H1 (cell line): ENCODE measurements at regions of chr9 and their contacts with region 1.

Region 1: DNA sequence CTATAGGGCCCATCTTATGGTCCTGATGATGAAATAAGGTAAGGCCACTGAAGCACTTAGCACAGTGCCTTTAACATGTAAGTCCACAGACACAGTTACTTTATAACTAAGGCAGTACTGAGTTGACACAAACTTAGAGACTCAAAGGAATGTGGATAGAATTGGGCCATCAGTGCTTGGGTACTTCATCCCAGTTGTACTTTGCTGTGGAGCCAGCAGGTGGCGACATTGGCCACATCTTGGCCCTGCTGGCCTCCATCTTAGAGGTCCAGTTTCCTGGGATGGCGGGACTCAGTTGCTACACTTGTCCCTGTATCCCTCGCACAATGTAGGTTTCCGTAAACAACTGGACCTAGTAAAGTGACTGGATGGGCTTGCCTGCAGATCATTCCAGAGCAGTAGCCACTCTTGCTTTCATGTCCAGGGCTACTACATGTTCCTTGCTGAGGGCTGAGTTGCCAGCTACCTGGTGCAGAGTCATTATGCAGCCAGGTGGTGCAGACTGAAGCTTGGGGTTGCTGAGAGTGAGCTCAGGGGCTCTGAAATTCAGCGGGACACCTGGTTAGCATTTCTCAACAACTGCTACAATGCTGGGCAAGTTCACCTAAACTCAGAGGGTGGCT is 10.6 kb downstream of the MTAP start:
- DNase-seq: peak in 1 of 2 experiments; percentile 81
- H3K4me3 ChIP-seq: no peak overlapping the region
- H3K27ac ChIP-seq: no peak overlapping the region
- H3K4me1 ChIP-seq: peaks cover 0 to 2% (median under 1%) of the 10 kb centered on the region in 4 experiments; a peak in 2 of 7 replicates
- H3K27me3 ChIP-seq: no peaks in the 10 kb centered on the region
- CTCF ChIP-seq: peak; percentile 80 to 98 (median 88)
- EP300 ChIP-seq: no peak
- POLR2A ChIP-seq: no peak
- RAD21 ChIP-seq: peak; percentile 84 to 88

Region 2: GRCh38 chr9:21624675-21625644 is 188.1 kb before region 1 on chr9:
- CTCF ChIA-PET with region 1: no interaction called
- POLR2A ChIA-PET with region 1: no interaction called
- DNase-seq: no peak
- H3K4me3 ChIP-seq: no peak overlapping the region
- H3K27ac ChIP-seq: no peak overlapping the region
- H3K4me1 ChIP-seq: no peaks in the 10 kb centered on the region
- H3K27me3 ChIP-seq: no peaks in the 10 kb centered on the region
- CTCF ChIP-seq: no peak
- EP300 ChIP-seq: no peak
- POLR2A ChIP-seq: no peak
- RAD21 ChIP-seq: no peak

Region 3: GRCh38 chr9:21802195-21803000 is 10.7 kb before region 1 on chr9 and contains the start of gene MTAP:
- CTCF ChIA-PET with region 1: interaction called, 15 read pairs
- POLR2A ChIA-PET with region 1: interaction called, 28 read pairs
- DNase-seq: peak; percentile 81 to 87
- H3K4me3 ChIP-seq: peak within 1 kb of the TSS; percentile 88 to 93 (median 90)
- H3K27ac ChIP-seq: peak within 1 kb of the TSS; percentile 89
- H3K4me1 ChIP-seq: peaks cover 0 to 16% (median 10%) of the 10 kb centered on the region in 4 experiments; a peak in 4 of 7 replicates
- H3K27me3 ChIP-seq: no peaks in the 10 kb centered on the region; a peak in 1 of 7 replicates
- CTCF ChIP-seq: no peak
- EP300 ChIP-seq: no peak
- POLR2A ChIP-seq: peak; percentile 79 to 99
- RAD21 ChIP-seq: no peak
- total RNA-seq, gene MTAP: 100 and 107 TPM in 2 replicates

Region 4: DNA sequence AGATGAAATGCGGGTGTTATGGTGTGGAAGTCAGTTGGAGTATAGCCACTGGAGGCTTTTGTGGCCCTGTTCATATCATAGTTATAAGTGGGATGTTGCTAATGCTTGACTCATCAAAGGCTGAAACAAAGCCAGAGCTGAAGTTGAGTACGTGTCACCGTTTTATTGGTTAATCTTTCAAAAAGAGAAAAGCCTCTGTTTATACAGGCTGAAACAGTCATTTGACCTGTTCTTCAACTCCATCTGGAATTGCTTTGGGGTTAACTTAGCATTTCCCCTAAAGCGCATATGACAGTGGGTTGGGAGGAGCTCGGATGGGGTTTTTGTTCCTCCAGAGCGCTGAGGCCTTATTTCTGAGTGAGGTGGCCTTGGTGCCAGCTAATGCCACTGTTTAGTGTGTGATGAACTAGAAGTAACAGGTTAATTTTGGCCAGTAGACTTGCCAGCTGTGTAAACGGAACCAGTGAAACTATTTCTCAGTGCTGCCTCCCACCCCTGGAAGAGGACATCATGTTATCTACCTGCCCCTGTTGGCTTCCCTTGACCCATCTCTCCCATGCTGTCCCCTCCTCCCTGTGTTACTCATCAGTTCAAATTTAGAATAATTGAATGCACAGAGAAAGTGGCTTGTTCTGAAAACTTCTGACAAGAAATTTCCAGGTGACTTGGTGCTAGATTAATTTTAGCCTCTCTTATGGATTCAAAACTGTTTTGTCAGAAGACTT is 23.5 kb after region 1 on chr9:
- CTCF ChIA-PET with region 1: interaction called, 19 read pairs
- POLR2A ChIA-PET with region 1: interaction called, 3 read pairs
- DNase-seq: no peak
- H3K4me3 ChIP-seq: no peak overlapping the region
- H3K27ac ChIP-seq: no peak overlapping the region
- H3K4me1 ChIP-seq: no peaks in the 10 kb centered on the region
- H3K27me3 ChIP-seq: no peaks in the 10 kb centered on the region
- CTCF ChIP-seq: no peak
- EP300 ChIP-seq: no peak
- POLR2A ChIP-seq: no peak
- RAD21 ChIP-seq: no peak

Region 5: GRCh38 chr9:21856301-21857094 is 43.4 kb after region 1 on chr9:
- CTCF ChIA-PET with region 1: interaction called, 11 read pairs
- POLR2A ChIA-PET with region 1: no interaction called
- DNase-seq: no peak
- H3K4me3 ChIP-seq: no peak overlapping the region
- H3K27ac ChIP-seq: no peak overlapping the region
- H3K4me1 ChIP-seq: no peaks in the 10 kb centered on the region
- H3K27me3 ChIP-seq: no peaks in the 10 kb centered on the region
- CTCF ChIP-seq: no peak
- EP300 ChIP-seq: no peak
- POLR2A ChIP-seq: no peak
- RAD21 ChIP-seq: no peak

Region 6: DNA sequence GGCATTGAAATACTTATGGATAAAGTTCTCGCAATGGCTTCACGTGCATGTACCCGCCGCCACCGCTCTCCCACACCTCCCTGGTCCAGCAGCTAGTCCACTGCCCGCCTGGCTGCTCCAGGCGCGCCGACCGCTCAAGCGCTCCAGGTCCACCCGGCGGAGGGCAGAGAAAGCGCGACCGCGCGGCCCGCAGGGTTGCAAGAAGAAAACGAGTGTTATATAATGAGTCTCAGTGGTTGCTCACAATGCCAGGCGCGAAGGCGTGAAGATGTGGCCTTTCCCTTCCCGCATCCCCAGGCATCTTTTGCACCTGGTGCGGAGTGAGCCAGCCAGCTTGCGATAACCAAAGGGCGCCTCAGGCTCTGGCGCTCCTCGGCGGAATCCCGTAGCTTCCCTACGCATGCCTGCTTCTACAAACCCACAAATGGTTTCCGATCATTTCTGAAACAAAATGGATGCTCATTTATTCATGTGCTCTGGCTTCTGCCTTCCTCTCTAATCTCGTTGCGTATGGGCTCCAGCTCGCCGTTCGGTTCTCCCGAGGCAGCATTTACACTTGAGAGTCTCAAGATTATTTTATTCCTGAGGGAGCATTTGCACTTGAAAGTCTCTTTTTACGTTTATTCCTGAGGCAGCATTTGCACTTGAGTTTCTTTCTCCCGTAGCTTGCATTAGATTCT is 155.4 kb after region 1 on chr9:
- CTCF ChIA-PET with region 1: interaction called, 11 read pairs
- POLR2A ChIA-PET with region 1: no interaction called
- DNase-seq: peak in 1 of 2 experiments; percentile 59
- H3K4me3 ChIP-seq: peak overlapping the region in 1 of 4 experiments; percentile 25; a peak in 1 of 8 replicates
- H3K27ac ChIP-seq: no peak overlapping the region
- H3K4me1 ChIP-seq: peaks cover 7 to 25% (median 14%) of the 10 kb centered on the region in 4 experiments
- H3K27me3 ChIP-seq: peaks cover 80 to 100% (median 93%) of the 10 kb centered on the region in 4 experiments
- CTCF ChIP-seq: no peak
- EP300 ChIP-seq: no peak
- POLR2A ChIP-seq: no peak
- RAD21 ChIP-seq: no peak

Region 7: GRCh38 chr9:22119537-22120158 is 306.6 kb after region 1 on chr9:
- CTCF ChIA-PET with region 1: interaction called, 30 read pairs
- POLR2A ChIA-PET with region 1: no interaction called
- DNase-seq: no peak
- H3K4me3 ChIP-seq: no peak overlapping the region
- H3K27ac ChIP-seq: no peak overlapping the region
- H3K4me1 ChIP-seq: peaks cover 2 to 8% (median 6%) of the 10 kb centered on the region in 4 experiments; a peak in 5 of 7 replicates
- H3K27me3 ChIP-seq: no peaks in the 10 kb centered on the region; a peak in 1 of 7 replicates
- CTCF ChIP-seq: peak in 2 of 3 experiments; percentile 59 to 74; a peak in 3 of 4 replicates
- EP300 ChIP-seq: no peak
- POLR2A ChIP-seq: no peak
- RAD21 ChIP-seq: peak; percentile 75 to 83

Region 8: GRCh38 chr9:22244141-22245011 is 431.3 kb after region 1 on chr9:
- CTCF ChIA-PET with region 1: interaction called, 20 read pairs
- POLR2A ChIA-PET with region 1: no interaction called
- DNase-seq: no peak
- H3K4me3 ChIP-seq: no peak overlapping the region
- H3K27ac ChIP-seq: no peak overlapping the region
- H3K4me1 ChIP-seq: no peaks in the 10 kb centered on the region
- H3K27me3 ChIP-seq: no peaks in the 10 kb centered on the region
- CTCF ChIP-seq: peak in 2 of 3 experiments; percentile 52 to 56; a peak in 3 of 4 replicates
- EP300 ChIP-seq: no peak
- POLR2A ChIP-seq: no peak
- RAD21 ChIP-seq: peak; percentile 63 to 70